ENCODE measurements at regions of chrX and their contacts with region 1.

Region 1: DNA sequence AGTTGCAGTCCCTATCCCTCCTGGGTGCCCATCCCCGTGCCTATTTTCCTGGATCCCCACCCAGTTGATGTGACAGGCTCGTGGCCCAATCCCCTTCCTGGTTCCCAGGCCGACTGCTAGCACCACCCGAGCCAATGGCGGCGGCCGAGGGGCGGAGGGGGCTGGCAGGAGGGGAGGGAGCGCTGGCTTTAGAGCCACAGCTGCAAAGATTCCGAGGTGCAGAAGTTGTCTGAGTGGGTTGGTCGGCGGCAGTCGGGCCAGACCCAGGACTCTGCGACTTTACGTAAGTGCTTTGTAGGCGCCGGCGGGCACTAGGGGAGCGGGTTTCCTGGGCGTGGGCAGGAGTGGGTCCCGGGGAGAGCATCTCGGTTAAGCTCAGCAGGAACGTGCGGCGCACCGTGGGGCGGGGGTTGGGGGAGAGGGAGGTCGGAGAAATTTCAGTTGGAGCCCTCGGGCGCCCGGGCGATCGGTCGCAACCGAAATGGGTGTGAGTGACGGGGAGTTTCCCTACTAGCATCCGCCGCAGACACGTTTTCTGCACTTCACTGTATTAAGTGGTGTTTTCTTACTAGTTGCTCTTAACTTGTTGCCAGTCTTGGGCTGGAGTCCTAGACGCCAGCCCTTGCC is at the start of gene PLS3:
- DNase-seq: peak; percentile 78
- ATAC-seq: peak; percentile 73
- H3K4me3 ChIP-seq: peak within 1 kb of the TSS; percentile 93
- H3K27ac ChIP-seq: peak within 1 kb of the TSS; percentile 95
- H3K4me1 ChIP-seq: peaks cover 50% of the 10 kb centered on the region
- H3K27me3 ChIP-seq: no peaks in the 10 kb centered on the region
- CTCF ChIP-seq: no peak
- total RNA-seq, gene PLS3: 248 and 267 TPM in 2 replicates

Region 2: DNA sequence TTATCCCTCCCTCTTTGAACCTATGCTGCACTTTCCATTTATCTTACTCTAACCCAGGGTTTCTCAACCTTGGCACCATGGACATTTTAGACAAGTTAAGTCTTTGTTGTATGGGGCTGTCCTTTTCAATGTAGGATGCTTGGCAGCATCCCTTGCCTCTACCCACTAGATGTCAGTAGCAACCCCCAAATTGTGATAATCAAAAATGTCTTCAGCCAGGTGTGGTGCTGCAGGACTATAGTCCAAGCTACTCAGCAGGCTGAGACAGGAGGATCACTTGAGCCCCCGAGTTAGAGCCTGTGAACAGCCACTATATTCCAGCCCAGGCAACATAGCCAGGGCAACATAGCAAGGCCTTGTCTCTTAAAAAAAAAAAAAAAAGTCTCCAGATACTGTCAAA is 334.2 kb before region 1 on chrX:
- CTCF ChIA-PET with region 1: no interaction called
- POLR2A ChIA-PET with region 1: no interaction called
- intact Hi-C with region 1: loop called (anchors 5 kb)
- DNase-seq: peak; percentile 66
- ATAC-seq: peak; percentile 88
- H3K4me3 ChIP-seq: no peak overlapping the region
- H3K27ac ChIP-seq: no peak overlapping the region
- H3K4me1 ChIP-seq: 0 out of 2 replicates have a peak, but pooled peaks cover 3% of the 10 kb centered on the region
- H3K27me3 ChIP-seq: peaks cover 19% of the 10 kb centered on the region
- CTCF ChIP-seq: peak; percentile 74

Region 3: DNA sequence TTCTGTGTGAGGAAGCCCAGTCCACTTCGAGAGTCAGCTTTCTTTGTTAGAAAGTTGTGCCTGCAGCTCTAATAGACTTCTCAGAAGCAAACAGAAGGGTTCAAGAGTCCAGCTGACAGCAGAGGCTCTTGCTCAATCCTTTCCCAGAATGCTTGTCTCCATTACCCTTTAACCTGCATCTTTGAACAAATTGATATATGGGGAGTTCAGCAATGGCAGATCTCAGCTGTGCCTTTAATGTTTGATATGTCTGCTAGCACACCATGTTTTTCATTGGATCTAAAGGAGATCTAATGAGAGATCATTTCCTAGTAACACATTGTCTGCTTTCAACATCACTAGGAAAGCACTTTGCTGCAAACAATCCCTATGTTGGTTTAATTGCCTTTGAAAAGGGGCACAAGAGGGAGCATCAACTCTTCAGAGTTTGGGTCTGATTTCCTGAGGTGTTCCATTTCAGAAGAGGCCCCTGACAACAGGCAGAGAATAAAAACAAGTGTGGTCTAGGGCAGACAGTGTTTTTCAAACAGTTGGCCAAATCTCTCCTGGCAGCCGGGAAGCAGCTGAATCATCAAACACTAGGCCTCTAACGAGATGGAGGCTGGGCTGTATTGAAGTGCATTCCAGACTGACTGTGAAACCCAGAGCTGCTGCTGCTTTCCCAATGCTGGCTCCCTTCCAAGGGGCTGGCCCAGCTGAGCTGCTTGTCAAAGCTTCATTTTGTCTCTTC is 216.0 kb before region 1 on chrX:
- CTCF ChIA-PET with region 1: no interaction called
- POLR2A ChIA-PET with region 1: no interaction called
- intact Hi-C with region 1: loop called (anchors 5 kb)
- DNase-seq: peak; percentile 86
- ATAC-seq: peak; percentile 90
- H3K4me3 ChIP-seq: no peak overlapping the region
- H3K27ac ChIP-seq: peak overlapping the region; percentile 74
- H3K4me1 ChIP-seq: peaks cover 16% of the 10 kb centered on the region
- H3K27me3 ChIP-seq: no peaks in the 10 kb centered on the region
- CTCF ChIP-seq: no peak

Region 4: GRCh38 chrX:115413246-115413878 is 147.7 kb before region 1 on chrX:
- CTCF ChIA-PET with region 1: no interaction called
- POLR2A ChIA-PET with region 1: no interaction called
- intact Hi-C with region 1: loop called (anchors 2 kb)
- DNase-seq: peak; percentile 47
- ATAC-seq: peak; percentile 89
- H3K4me3 ChIP-seq: no peak overlapping the region; the same call in 1 of the 2 replicates
- H3K27ac ChIP-seq: no peak overlapping the region
- H3K4me1 ChIP-seq: peaks cover 16% of the 10 kb centered on the region
- H3K27me3 ChIP-seq: no peaks in the 10 kb centered on the region
- CTCF ChIP-seq: no peak

Region 5: DNA sequence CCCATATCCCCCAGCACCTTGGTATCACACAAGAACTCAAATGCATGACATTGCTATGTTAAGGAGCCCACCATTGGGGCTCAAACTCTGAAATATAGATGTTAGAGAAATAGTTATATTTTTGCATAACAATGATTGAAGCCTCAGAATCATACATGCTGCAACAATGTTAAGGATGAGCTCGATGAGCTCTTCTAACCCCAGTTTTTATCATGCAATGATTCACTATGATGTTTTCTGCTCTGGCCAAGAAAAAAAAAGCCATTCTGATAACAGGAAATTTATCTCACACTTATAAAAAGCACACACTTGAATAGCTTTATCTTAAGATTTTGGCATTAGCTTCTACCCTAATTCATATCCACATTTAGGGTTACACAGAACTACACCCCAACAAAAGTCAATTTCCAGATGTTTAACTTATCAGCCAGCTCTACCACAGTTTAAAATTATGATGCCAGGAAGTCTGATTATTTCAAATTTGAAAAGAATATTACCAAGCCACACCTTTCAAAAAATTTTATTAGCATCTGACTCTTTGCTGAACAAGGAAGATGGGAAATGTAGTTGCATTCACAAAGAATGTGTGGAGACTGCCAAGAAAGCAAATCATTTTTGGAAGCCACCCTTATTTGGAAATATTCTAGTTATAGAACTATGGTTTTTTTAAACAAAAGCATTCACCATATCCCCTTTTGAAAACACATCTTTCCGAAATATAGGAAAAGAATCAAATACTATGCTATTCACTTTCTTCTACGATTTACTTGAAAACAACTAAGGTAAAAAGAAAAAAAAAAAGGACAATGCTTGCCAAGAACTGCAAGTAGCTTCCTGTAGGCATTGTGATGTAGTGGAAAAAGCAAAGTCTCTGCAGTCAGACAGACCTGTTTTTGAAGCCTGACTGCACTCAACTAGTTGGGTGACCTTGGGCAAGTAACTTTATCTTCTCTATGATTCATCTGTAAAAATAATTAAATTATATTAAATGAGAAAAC is 100.9 kb before region 1 on chrX:
- CTCF ChIA-PET with region 1: interaction called, 10 read pairs
- POLR2A ChIA-PET with region 1: no interaction called
- intact Hi-C with region 1: no loop called
- DNase-seq: peak; percentile 17
- ATAC-seq: peak; percentile 67
- H3K4me3 ChIP-seq: no peak overlapping the region
- H3K27ac ChIP-seq: no peak overlapping the region
- H3K4me1 ChIP-seq: peaks cover 9% of the 10 kb centered on the region
- H3K27me3 ChIP-seq: no peaks in the 10 kb centered on the region
- CTCF ChIP-seq: no peak

Region 6: GRCh38 chrX:115616943-115617563 is 56.0 kb after region 1 on chrX:
- CTCF ChIA-PET with region 1: no interaction called
- POLR2A ChIA-PET with region 1: interaction called, 3 read pairs
- intact Hi-C with region 1: loop called (anchors 2 kb)
- DNase-seq: peak; percentile 95
- ATAC-seq: peak; percentile 82
- H3K4me3 ChIP-seq: peak overlapping the region; percentile 30
- H3K27ac ChIP-seq: peak overlapping the region; percentile 100
- H3K4me1 ChIP-seq: peaks cover 38% of the 10 kb centered on the region
- H3K27me3 ChIP-seq: no peaks in the 10 kb centered on the region
- CTCF ChIP-seq: no peak

Region 7: DNA sequence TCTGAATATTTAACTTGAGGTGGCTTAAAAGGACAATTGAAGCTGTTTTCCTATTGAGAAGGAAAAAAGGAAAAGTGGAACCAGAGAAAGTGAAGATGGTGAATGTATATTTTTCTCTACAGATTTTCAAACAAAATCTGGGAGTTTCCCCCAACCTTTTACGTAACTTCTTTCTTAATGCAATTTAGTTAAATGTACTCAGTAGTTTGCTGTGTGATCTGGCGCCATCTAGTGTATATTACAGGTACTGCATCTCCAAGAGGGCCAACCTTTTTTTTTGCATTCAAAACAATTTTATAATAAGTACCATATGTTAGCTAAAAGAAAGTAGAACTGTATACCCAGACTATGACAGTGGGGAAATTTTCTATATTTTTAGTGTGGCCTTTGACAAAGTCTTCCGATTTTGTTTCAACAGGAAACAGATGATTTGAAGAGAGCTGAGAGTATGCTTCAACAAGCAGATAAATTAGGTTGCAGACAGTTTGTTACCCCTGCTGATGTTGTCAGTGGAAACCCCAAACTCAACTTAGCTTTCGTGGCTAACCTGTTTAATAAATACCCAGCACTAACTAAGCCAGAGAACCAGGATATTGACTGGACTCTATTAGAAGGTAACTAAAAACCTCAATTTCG is 81.9 kb after region 1 on chrX:
- CTCF ChIA-PET with region 1: no interaction called
- POLR2A ChIA-PET with region 1: interaction called, 5 read pairs
- intact Hi-C with region 1: loop called (anchors 2 kb)
- DNase-seq: peak; percentile 75
- ATAC-seq: peak; percentile 43
- H3K4me3 ChIP-seq: no peak overlapping the region
- H3K27ac ChIP-seq: peak overlapping the region; percentile 66
- H3K4me1 ChIP-seq: no peaks in the 10 kb centered on the region
- H3K27me3 ChIP-seq: no peaks in the 10 kb centered on the region
- CTCF ChIP-seq: peak; percentile 91

Measured in PC-3 (cell line).